ENCODE measurements at regions of chr9 and their contacts with region 1.

Region 1: GRCh38 chr9:35962126-35962906 is 4.4 kb upstream of the OR2S2 start:
- DNase-seq: peak; percentile 85
- ATAC-seq: peak; percentile 70
- H3K4me3 ChIP-seq: peak overlapping the region; percentile 38; the same call in 1 of the 2 replicates
- H3K27ac ChIP-seq: peak overlapping the region; percentile 90
- H3K4me1 ChIP-seq: peaks cover 25% of the 10 kb centered on the region
- H3K27me3 ChIP-seq: no peaks in the 10 kb centered on the region
- CTCF ChIP-seq: no peak
- POLR2A ChIP-seq: no peak
- RAD21 ChIP-seq: no peak

Region 2: DNA sequence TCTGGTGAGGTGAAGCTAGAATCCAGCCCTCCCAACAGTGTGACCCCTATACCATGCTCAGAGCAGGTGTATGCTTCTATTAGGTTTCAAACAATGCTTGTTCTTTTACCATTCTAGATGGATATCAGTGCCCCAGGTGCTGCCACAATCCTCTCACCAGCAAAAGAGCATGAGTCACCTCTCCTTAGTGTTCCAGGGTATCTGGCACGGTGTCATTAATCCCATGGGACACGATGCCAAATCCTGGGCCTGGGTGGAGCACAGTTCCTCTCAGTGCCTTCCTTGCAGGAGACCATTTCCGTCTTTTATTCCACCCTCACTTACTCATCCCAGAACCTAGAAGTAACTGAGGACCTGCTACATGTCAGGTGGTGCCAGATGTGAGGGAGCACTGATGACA is 90.8 kb before region 1 on chr9:
- CTCF ChIA-PET with region 1: no interaction called
- POLR2A ChIA-PET with region 1: no interaction called
- dilution Hi-C with region 1: no loop called
- in situ Hi-C with region 1: no loop called
- intact Hi-C with region 1: no loop called
- DNase-seq: no peak
- ATAC-seq: no peak
- H3K4me3 ChIP-seq: no peak overlapping the region
- H3K27ac ChIP-seq: no peak overlapping the region
- H3K4me1 ChIP-seq: no peaks in the 10 kb centered on the region
- H3K27me3 ChIP-seq: peaks cover 7% of the 10 kb centered on the region; the same call in 1 of the 2 replicates
- CTCF ChIP-seq: no peak
- POLR2A ChIP-seq: no peak
- RAD21 ChIP-seq: no peak

Region 3: DNA sequence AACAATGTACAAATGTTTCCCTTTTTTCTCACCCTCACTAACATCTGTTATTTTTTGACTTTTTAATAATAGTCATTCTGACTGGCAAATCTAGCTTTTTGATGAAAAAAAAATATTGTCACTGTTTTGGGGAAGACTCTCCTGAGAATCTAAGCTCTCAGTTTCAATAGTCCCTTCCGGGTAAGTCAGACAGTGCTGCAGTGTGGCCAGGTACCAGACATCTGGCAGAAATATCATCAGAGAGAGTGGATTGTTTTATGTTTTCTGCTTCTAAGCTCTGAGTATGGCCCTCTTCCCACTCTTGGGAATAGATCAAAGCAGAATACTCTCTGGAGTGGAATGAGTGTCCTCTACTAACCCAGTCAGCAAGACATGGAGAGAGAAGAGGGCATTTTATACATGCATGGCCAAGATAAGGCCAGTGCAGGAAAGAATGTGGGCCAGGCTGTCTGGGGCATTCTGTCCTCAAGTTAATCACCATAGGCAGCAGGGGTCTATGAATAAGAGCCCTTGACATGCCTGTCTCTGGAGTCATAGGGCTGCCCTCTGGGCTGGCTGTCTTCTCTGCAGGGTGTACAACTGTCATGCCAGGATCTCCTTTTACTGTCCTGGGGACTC is 34.2 kb after region 1 on chr9:
- CTCF ChIA-PET with region 1: no interaction called
- POLR2A ChIA-PET with region 1: no interaction called
- dilution Hi-C with region 1: no loop called
- in situ Hi-C with region 1: no loop called
- intact Hi-C with region 1: loop called (anchors 5 kb)
- DNase-seq: peak; percentile 16
- ATAC-seq: peak; percentile 59
- H3K4me3 ChIP-seq: no peak overlapping the region
- H3K27ac ChIP-seq: no peak overlapping the region
- H3K4me1 ChIP-seq: peaks cover 3% of the 10 kb centered on the region
- H3K27me3 ChIP-seq: no peaks in the 10 kb centered on the region
- CTCF ChIP-seq: no peak
- POLR2A ChIP-seq: no peak
- RAD21 ChIP-seq: no peak

Region 4: DNA sequence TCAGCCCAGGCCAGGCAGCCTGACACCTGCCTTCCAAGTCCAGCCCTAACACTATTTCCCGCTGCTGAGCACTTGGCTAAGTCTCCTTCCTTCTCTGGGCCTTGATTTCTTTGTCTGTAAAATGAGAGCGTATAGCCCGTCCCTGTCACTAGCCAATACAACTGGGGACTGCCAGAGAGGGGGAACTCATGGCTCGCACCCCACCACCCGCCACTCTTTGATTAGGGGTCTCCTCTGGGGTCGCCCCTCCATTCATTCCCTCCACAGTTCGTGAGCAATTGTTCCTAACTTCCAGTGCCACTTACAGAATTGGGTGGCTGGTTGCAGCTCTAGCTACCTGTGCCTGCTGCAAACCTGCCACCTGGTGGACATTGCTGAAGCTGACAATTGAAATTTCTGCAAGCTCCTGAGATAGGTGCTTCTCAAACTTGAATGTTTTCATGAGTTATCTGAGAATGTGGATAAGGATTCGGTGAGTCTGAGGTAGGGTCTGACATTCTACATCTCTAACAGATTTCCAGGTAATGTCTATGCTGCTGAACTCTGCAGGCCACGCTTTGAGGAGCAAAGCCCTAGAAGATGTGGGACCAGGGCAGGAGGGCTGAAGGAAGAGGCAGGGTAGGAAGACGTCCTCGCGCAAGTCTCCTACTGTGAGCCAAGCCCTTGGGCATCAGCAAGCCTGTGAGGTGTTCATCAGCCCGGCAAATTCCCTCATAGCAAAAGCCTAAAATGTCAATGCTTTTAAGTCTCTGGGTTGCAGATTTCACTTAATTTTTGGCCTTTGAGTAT is 61.1 kb after region 1 on chr9:
- CTCF ChIA-PET with region 1: interaction called, 11 read pairs
- POLR2A ChIA-PET with region 1: no interaction called
- dilution Hi-C with region 1: no loop called
- in situ Hi-C with region 1: loop called (anchors 5 kb)
- intact Hi-C with region 1: no loop called
- DNase-seq: peak; percentile 78
- ATAC-seq: peak; percentile 65
- H3K4me3 ChIP-seq: no peak overlapping the region
- H3K27ac ChIP-seq: no peak overlapping the region
- H3K4me1 ChIP-seq: peaks cover 16% of the 10 kb centered on the region
- H3K27me3 ChIP-seq: no peaks in the 10 kb centered on the region
- CTCF ChIP-seq: peak; percentile 79
- POLR2A ChIP-seq: no peak
- RAD21 ChIP-seq: peak; percentile 90

Region 5: GRCh38 chr9:36166101-36166927 is 204.0 kb after region 1 on chr9:
- CTCF ChIA-PET with region 1: no interaction called
- POLR2A ChIA-PET with region 1: no interaction called
- dilution Hi-C with region 1: no loop called
- in situ Hi-C with region 1: loop called (anchors 10 kb)
- intact Hi-C with region 1: no loop called
- DNase-seq: peak; percentile 81
- ATAC-seq: peak; percentile 91
- H3K4me3 ChIP-seq: peak overlapping the region; percentile 55
- H3K27ac ChIP-seq: peak overlapping the region; percentile 35
- H3K4me1 ChIP-seq: peaks cover 29% of the 10 kb centered on the region
- H3K27me3 ChIP-seq: no peaks in the 10 kb centered on the region; the same call in 1 of the 2 replicates
- CTCF ChIP-seq: peak; percentile 92
- POLR2A ChIP-seq: 0 out of 2 replicates have a peak, but pooled peaks have one; percentile 28
- RAD21 ChIP-seq: peak; percentile 93

Measured in IMR-90 (cell line).